Dendritic cell treated with granulocyte-macrophage colony-stimulating factor and Interleukin-4, amounts not matched to agents 40 ng/mL and 50 ng/mL, for 4 days (primary cell): ENCODE measurements at regions of chr2 and their contacts with region 1.

Region 1: DNA sequence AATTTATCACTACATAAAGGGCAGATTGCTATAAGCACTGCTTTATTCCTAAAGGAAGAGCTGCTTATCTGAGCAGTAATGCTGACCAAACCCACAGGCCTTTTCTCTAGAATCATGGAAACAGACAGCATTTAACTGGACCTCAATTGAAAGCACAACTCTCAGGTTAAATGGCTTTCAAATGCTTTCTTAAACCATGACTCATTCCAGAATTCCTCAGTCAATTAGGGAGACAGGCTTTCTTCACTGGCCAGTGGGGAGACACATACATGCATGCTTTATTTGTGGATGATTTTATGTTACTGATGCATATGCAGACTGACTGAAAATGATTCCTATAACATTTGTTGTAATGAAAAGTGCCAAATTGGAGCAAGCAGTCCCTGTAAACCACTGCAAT is 114.6 kb downstream of the ACVR1 start:
- H3K4me3 Mint-ChIP-seq: no peak overlapping the region
- H3K27ac Mint-ChIP-seq: no peak overlapping the region
- H3K4me1 Mint-ChIP-seq: no peaks in the 10 kb centered on the region
- H3K27me3 Mint-ChIP-seq: no peaks in the 10 kb centered on the region

Region 2: DNA sequence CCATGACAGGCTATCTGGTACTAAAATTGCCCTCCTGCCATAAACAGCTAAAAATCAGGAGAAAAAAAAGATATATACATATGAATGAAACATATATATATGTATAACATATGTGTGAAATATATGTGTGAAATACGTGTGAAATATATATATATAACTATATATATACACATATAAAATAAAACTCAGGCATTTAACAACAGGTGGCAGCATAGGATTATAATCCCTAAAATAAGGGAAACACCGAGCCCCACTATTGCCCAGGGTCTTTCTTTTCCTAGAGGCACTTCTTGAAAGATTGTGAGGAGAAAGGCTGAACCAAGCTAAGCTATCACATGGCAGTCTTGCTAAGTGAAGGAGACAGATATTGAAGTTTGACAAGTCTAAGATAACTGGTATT is 251.8 kb before region 1 on chr2:
- intact Hi-C with region 1: loop called (anchors 10 kb)
- H3K4me3 Mint-ChIP-seq: no peak overlapping the region
- H3K27ac Mint-ChIP-seq: no peak overlapping the region
- H3K4me1 Mint-ChIP-seq: peaks cover 6% of the 10 kb centered on the region
- H3K27me3 Mint-ChIP-seq: no peaks in the 10 kb centered on the region

Region 3: GRCh38 chr2:157699806-157700205 is 61.7 kb before region 1 on chr2:
- intact Hi-C with region 1: no loop called
- H3K4me3 Mint-ChIP-seq: no peak overlapping the region
- H3K27ac Mint-ChIP-seq: no peak overlapping the region
- H3K4me1 Mint-ChIP-seq: no peaks in the 10 kb centered on the region
- H3K27me3 Mint-ChIP-seq: no peaks in the 10 kb centered on the region

Region 4: GRCh38 chr2:158403237-158403636 is 641.7 kb after region 1 on chr2:
- intact Hi-C with region 1: no loop called
- H3K4me3 Mint-ChIP-seq: no peak overlapping the region
- H3K27ac Mint-ChIP-seq: no peak overlapping the region
- H3K4me1 Mint-ChIP-seq: no peaks in the 10 kb centered on the region
- H3K27me3 Mint-ChIP-seq: no peaks in the 10 kb centered on the region